Dendritic cell treated with granulocyte-macrophage colony-stimulating factor and Interleukin-4, amounts not matched to agents 40 ng/mL and 50 ng/mL, for 4 days (primary cell): ENCODE measurements at regions of chr1 and their contacts with region 1.

Region 1: GRCh38 chr1:148333875-148334338 is 149.2 kb downstream of the PPIAL4G start:
- H3K4me3 Mint-ChIP-seq: peak overlapping the region; percentile 90
- H3K27ac Mint-ChIP-seq: peak overlapping the region; percentile 94
- H3K4me1 Mint-ChIP-seq: peaks cover 29% of the 10 kb centered on the region
- H3K27me3 Mint-ChIP-seq: peaks cover 38% of the 10 kb centered on the region

Region 2: DNA sequence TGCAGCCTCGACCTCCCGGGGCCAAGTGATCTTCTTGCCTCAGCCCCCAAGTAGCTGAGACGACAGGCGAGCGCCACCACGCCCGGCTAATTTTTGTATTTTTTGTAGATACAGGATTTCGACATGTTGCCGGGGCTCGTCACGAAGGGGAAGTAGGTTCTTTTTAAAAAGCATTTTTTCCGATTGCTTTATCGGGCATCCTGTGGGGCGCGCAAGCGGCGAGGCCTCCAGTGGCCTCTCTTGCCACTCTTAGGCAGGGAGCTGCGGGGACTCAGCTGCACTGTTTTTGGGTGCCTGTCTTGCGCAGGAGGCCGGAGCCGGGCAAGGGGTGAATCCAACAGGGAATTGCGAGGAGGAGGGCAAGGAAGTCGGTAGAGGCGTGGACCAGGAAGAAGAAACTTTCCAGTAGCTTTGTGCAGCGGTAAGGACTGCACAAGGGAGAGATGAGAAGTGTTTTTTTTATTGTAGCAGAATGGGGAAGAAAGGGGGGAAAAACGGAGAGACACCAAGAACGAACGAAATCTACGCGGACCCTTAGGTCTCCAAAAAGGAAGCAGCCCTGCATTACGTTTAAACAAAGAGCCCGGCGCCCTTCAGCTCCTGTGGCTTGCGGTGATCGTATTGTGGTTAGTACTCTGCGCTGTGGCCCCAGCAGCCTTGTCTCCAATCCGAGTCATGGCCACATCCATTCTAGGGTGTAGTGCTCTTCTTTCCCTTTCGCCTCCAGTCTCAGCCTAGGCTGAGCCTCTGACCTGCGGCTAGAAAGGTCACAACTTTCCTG is 15.6 kb before region 1 on chr1:
- intact Hi-C with region 1: loop called (anchors 2 kb)
- H3K4me3 Mint-ChIP-seq: peak overlapping the region; percentile 94
- H3K27ac Mint-ChIP-seq: peak overlapping the region; percentile 91
- H3K4me1 Mint-ChIP-seq: peaks cover 23% of the 10 kb centered on the region
- H3K27me3 Mint-ChIP-seq: peaks cover 11% of the 10 kb centered on the region